ENCODE measurements at regions of chr1 and their contacts with region 1.

Region 1: DNA sequence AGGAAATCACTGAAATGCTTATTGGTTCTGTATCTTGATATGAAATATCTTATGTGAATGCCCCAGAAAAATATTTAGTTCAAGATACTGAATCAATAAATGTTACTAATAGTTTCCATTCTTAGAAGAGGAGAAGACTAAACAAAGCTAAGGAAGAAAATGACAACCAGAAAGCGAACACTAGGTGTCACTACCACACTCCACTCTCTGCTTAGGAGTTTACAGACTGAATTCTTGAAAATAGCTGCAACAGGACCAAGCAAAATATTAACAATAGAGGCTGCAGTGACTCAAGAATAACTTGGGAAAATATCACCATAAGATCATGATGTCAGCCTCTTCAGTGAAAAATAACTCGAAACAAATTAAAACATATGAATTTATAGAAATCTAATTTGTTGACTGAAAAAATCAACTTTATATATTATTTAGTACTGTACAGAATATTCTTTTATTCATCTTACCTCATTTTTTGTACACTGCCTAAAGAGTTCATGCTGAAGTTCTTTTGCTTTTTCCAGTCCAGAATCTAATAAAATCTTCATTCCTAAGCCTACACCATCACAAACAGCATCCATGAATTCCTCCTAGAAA is 61.6 kb downstream of the KIF14 start:
- DNase-seq: peak; percentile 62
- H3K4me3 Mint-ChIP-seq: no peak overlapping the region
- H3K27ac Mint-ChIP-seq: peak overlapping the region; percentile 28
- H3K4me1 Mint-ChIP-seq: peaks cover 6% of the 10 kb centered on the region
- H3K27me3 Mint-ChIP-seq: no peaks in the 10 kb centered on the region
- CTCF ChIP-seq: peak; percentile 81

Region 2: DNA sequence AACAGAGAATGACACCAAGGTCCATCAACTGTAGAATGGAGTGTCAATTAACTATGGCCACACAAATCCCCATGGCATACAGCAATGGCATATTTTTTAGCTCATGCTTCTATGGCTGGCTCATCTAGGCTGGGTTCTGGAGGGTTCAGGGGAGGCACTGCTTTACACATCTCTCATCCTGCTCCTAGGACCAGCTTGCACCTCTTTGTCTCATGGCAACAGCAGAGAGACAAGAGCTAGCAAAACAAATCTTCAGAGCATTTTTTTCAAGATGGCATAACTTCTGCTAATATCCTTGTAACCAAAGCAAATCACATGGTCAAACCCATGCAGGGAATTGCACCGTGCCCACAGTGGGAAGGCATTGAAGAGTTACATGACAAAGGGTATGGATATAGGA is 20.8 kb before region 1 on chr1:
- CTCF ChIA-PET with region 1: interaction called, 14 read pairs
- POLR2A ChIA-PET with region 1: no interaction called
- intact Hi-C with region 1: no loop called
- DNase-seq: no peak
- H3K4me3 Mint-ChIP-seq: no peak overlapping the region
- H3K27ac Mint-ChIP-seq: no peak overlapping the region
- H3K4me1 Mint-ChIP-seq: peaks cover 6% of the 10 kb centered on the region
- H3K27me3 Mint-ChIP-seq: no peaks in the 10 kb centered on the region
- CTCF ChIP-seq: no peak

Region 3: DNA sequence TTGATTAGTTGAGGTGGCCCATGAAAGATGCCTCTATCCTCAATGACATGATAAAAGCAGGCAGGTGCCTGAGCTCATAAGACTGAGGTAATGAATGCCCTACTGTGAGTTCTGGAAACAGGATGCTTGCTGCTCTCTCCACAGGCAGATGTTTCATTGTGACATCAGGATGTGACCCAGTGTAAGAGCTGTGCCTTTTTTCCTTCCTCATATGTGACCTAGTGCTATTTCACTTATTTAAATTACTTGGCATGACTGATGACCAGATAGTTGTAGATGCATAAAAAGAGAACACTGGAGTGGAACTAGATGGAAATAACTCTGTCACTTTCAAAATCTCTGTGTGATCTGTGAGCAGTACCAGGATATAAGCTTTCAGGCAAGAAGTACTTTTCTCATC is 29.7 kb after region 1 on chr1:
- CTCF ChIA-PET with region 1: interaction called, 19 read pairs
- POLR2A ChIA-PET with region 1: interaction called, 3 read pairs
- intact Hi-C with region 1: no loop called
- DNase-seq: no peak
- H3K4me3 Mint-ChIP-seq: no peak overlapping the region
- H3K27ac Mint-ChIP-seq: no peak overlapping the region
- H3K4me1 Mint-ChIP-seq: no peaks in the 10 kb centered on the region
- H3K27me3 Mint-ChIP-seq: no peaks in the 10 kb centered on the region
- CTCF ChIP-seq: no peak

Region 4: GRCh38 chr1:200837931-200838571 is 279.1 kb after region 1 on chr1:
- CTCF ChIA-PET with region 1: interaction called, 50 read pairs
- POLR2A ChIA-PET with region 1: interaction called, 4 read pairs
- intact Hi-C with region 1: loop called (anchors 1 kb)
- DNase-seq: peak; percentile 45
- H3K4me3 Mint-ChIP-seq: no peak overlapping the region
- H3K27ac Mint-ChIP-seq: no peak overlapping the region
- H3K4me1 Mint-ChIP-seq: peaks cover 16% of the 10 kb centered on the region
- H3K27me3 Mint-ChIP-seq: no peaks in the 10 kb centered on the region
- CTCF ChIP-seq: peak; percentile 67

Region 5: GRCh38 chr1:201023517-201023902 is 464.5 kb after region 1 on chr1 and contains the start of gene KIF21B:
- CTCF ChIA-PET with region 1: interaction called, 4 read pairs
- POLR2A ChIA-PET with region 1: no interaction called
- intact Hi-C with region 1: loop called (anchors 5 kb)
- DNase-seq: peak; percentile 90
- H3K4me3 Mint-ChIP-seq: peak within 1 kb of the TSS; percentile 43
- H3K27ac Mint-ChIP-seq: no peak within 1 kb of the TSS
- H3K4me1 Mint-ChIP-seq: peaks cover 22% of the 10 kb centered on the region
- H3K27me3 Mint-ChIP-seq: no peaks in the 10 kb centered on the region
- CTCF ChIP-seq: no peak
- total RNA-seq, gene KIF21B: 9.5 and 12.7 TPM in 2 replicates

Measured in MCF 10A (cell line).